Activated T-helper 2 cell treated with anti-CD3 and anti-CD28 coated beads, Interferon-gamma antibody, Interleukin-2, Interleukin-4, amounts not matched to agents 10 μg/mL and 5 μg/mL and 100 μg/mL, durations not matched to agents 14 hours and 24 hours and 36 hours (primary cell): ENCODE measurements at regions of chr4 and their contacts with region 1.

Region 1: GRCh38 chr4:15756361-15756861 is 21.7 kb upstream of the CD38 start:
- DNase-seq: peak; percentile 76
- H3K4me3 Mint-ChIP-seq: peak overlapping the region; percentile 80
- H3K27ac Mint-ChIP-seq: peak overlapping the region; percentile 96
- H3K4me1 Mint-ChIP-seq: peaks cover 54% of the 10 kb centered on the region
- H3K27me3 Mint-ChIP-seq: no peaks in the 10 kb centered on the region

Region 2: GRCh38 chr4:15368856-15369255 is 387.6 kb before region 1 on chr4:
- intact Hi-C with region 1: loop called (anchors 5 kb)
- DNase-seq: no peak
- H3K4me3 Mint-ChIP-seq: no peak overlapping the region
- H3K27ac Mint-ChIP-seq: peak overlapping the region; percentile 56
- H3K4me1 Mint-ChIP-seq: peaks cover 53% of the 10 kb centered on the region
- H3K27me3 Mint-ChIP-seq: peaks cover 11% of the 10 kb centered on the region

Region 3: DNA sequence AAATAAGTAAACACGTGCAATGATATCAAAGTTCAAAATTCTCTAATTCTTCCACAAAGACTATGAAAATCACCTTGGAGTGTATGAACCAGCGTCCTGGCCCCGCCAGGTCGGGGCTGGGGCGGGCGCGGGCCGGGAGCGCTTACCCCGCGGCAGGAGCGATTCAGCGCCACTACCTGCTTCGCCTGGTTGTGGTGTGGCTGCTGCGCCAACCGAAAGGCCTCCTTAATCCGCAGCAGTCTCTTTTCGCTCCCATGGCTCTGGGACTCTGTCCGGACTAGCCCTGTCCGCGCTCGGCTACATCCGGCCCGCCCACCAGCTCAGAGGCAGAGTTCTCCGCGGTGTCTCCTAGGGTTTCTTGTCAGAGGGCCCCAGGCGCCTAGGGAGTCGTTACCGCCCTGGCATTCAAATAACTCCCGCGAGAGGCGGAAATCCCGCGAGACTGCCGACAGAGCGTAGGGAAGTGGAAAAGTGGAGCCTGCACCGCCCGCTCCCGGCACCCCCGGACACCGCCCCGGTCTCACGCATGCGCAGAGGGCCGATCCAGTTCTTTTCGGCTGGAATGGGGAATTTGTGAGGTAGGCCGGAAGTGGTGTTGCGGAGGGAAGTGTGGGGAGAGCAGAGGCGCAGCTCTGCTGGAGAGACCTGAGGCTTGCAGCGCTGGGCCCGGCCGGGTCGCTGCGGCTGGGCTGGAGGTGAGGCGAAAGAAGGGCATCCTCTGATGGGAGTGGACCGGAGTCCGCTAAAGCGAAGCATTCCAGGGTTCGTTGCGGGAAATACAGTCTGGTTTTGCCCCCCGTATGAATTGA is 75.0 kb before region 1 on chr4 and contains the start of gene FAM200B:
- intact Hi-C with region 1: loop called (anchors 1 kb)
- DNase-seq: peak; percentile 97
- H3K4me3 Mint-ChIP-seq: peak within 1 kb of the TSS; percentile 99
- H3K27ac Mint-ChIP-seq: peak within 1 kb of the TSS; percentile 94
- H3K4me1 Mint-ChIP-seq: peaks cover 34% of the 10 kb centered on the region
- H3K27me3 Mint-ChIP-seq: no peaks in the 10 kb centered on the region
- total RNA-seq, gene FAM200B: 5.6 and 6.8 TPM in 2 replicates

Region 4: DNA sequence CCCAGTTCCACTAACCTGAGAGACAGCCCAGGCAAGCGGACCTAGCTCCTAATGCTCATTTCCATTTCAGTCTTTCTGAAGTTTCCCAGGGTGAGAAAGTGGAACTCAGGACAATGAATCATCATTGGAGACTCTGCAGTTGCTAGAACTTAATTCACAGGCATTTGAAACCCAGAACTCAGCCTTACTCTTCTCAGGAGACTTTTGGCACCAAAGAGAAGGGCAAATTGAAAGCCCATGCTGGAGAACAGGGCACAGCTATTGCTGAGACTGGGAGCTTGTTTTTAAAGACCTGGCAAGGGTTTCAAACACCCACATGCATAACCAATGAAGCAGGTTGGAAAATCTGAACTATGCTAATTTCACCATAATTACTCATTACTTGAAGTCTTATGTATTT is 17.5 kb before region 1 on chr4:
- intact Hi-C with region 1: loop called (anchors 1 kb)
- DNase-seq: no peak
- H3K4me3 Mint-ChIP-seq: no peak overlapping the region
- H3K27ac Mint-ChIP-seq: peak overlapping the region; percentile 50
- H3K4me1 Mint-ChIP-seq: peaks cover 50% of the 10 kb centered on the region
- H3K27me3 Mint-ChIP-seq: no peaks in the 10 kb centered on the region

Region 5: DNA sequence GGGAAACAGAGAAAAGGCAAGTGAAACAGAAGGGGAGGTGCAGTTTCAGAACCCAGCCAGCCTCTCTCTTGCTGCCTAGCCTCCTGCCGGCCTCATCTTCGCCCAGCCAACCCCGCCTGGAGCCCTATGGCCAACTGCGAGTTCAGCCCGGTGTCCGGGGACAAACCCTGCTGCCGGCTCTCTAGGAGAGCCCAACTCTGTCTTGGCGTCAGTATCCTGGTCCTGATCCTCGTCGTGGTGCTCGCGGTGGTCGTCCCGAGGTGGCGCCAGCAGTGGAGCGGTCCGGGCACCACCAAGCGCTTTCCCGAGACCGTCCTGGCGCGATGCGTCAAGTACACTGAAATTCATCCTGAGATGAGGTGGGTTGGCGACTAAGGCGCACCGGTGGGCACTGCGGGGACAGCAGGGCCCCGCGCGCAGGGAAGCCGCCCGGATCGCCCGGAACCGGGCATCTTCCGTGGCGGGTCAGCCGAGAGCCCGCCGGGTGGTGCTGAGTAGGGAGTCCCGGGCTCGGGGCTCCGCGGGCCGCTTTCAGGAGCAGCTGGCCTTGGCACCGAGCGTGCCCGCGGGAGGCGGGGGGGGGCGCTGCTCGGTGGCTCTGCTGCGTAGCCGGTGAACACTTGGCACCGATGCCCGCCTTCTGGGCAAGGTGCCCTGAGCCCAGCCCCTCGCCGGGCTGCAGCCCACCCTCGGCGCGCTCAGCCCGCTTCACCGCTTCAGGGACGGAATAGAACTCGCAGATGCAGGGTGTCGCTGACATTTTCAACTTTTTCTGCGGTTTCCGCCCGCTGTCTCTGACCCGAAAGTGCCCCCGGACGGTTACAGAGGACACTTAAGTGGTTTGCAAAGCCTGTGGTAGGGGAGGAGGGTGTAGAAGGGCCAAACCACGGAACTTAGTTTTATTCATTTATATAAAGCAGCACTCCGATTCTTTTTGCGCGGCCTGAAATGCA is 22.2 kb after region 1 on chr4 and contains the start of gene CD38:
- intact Hi-C with region 1: loop called (anchors 1 kb)
- DNase-seq: peak; percentile 65
- H3K4me3 Mint-ChIP-seq: peak within 1 kb of the TSS; percentile 93
- H3K27ac Mint-ChIP-seq: peak within 1 kb of the TSS; percentile 91
- H3K4me1 Mint-ChIP-seq: peaks cover 69% of the 10 kb centered on the region
- H3K27me3 Mint-ChIP-seq: no peaks in the 10 kb centered on the region
- total RNA-seq, gene CD38: 75.3 and 87.1 TPM in 2 replicates

Region 6: GRCh38 chr4:16225863-16226815 is 469.7 kb after region 1 on chr4 and contains the start of gene TAPT1:
- intact Hi-C with region 1: loop called (anchors 10 kb)
- DNase-seq: peak; percentile 74
- H3K4me3 Mint-ChIP-seq: peak within 1 kb of the TSS; percentile 95
- H3K27ac Mint-ChIP-seq: peak within 1 kb of the TSS; percentile 98
- H3K4me1 Mint-ChIP-seq: peaks cover 48% of the 10 kb centered on the region
- H3K27me3 Mint-ChIP-seq: no peaks in the 10 kb centered on the region
- total RNA-seq, gene TAPT1: 28.1 and 32.9 TPM in 2 replicates